ENCODE measurements at regions of chr1 and their contacts with region 1.

Region 1: DNA sequence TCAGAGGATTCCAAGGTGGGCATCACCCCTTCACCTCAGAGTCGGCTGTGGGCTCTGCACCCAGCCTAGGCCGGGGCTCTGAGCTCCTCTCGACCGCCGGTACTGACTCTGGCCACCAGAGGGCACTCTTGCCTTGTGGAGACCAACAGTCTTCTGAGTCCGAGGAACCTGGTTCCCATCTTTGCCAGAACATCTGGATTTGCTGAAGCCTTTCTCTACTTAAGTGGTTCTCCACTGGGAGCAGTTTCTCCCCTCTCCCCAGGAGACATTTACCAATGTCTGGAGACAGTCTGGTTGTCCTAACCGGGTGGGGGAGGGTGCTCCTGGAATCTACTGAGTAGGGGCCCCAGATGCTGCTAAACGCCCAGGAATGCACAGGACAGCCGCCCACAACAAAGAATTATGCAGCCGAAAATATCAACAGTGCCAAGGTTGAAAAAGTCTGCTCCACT is 9.4 kb downstream of the ETV3L start:
- DNase-seq: peak; percentile 93
- ATAC-seq: peak; percentile 92
- H3K4me3 Mint-ChIP-seq: no peak overlapping the region
- H3K27ac Mint-ChIP-seq: no peak overlapping the region
- H3K4me1 Mint-ChIP-seq: no peaks in the 10 kb centered on the region
- H3K27me3 Mint-ChIP-seq: peaks cover 5% of the 10 kb centered on the region
- CTCF ChIP-seq: peak; percentile 93

Region 2: GRCh38 chr1:157073944-157074767 is 16.1 kb before region 1 on chr1:
- CTCF ChIA-PET with region 1: interaction called, 12 read pairs
- POLR2A ChIA-PET with region 1: no interaction called
- intact Hi-C with region 1: no loop called
- DNase-seq: peak; percentile 75
- ATAC-seq: no peak
- H3K4me3 Mint-ChIP-seq: no peak overlapping the region
- H3K27ac Mint-ChIP-seq: no peak overlapping the region
- H3K4me1 Mint-ChIP-seq: no peaks in the 10 kb centered on the region
- H3K27me3 Mint-ChIP-seq: peaks cover 19% of the 10 kb centered on the region
- CTCF ChIP-seq: peak; percentile 53

Region 3: DNA sequence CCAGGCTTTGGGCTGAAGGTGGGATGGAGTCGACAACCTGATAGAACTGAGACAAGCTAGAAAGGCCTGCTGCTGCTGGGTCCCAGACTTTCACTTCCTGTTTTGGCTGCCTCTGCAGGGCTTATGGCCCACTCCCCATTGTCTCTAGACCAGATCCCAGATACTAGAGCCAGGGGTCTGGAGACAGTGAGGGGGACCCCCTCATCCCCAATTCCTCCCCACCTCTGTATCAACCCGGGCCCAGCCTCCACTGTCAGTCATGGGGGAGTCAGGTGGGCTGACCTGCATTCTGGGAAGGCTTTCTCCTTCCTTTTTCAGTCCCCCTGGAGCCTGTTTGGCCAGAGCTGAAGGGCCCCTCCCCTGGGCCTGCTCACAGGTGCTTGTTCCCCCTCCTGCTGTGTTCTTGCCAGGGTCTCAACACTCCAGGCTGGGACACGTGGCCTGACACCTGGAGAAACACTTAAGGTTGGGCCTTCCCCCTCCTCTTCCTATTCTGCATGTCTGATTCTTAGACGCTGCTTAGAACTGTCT is 27.4 kb after region 1 on chr1:
- CTCF ChIA-PET with region 1: interaction called, 27 read pairs
- POLR2A ChIA-PET with region 1: interaction called, 3 read pairs
- intact Hi-C with region 1: no loop called
- DNase-seq: no peak
- ATAC-seq: no peak
- H3K4me3 Mint-ChIP-seq: no peak overlapping the region
- H3K27ac Mint-ChIP-seq: no peak overlapping the region
- H3K4me1 Mint-ChIP-seq: no peaks in the 10 kb centered on the region
- H3K27me3 Mint-ChIP-seq: no peaks in the 10 kb centered on the region
- CTCF ChIP-seq: no peak

Region 4: GRCh38 chr1:157156058-157156541 is 65.9 kb after region 1 on chr1:
- CTCF ChIA-PET with region 1: interaction called, 562 read pairs
- POLR2A ChIA-PET with region 1: interaction called, 18 read pairs
- intact Hi-C with region 1: loop called (anchors 2 kb)
- DNase-seq: peak; percentile 86
- ATAC-seq: peak; percentile 80
- H3K4me3 Mint-ChIP-seq: no peak overlapping the region
- H3K27ac Mint-ChIP-seq: no peak overlapping the region
- H3K4me1 Mint-ChIP-seq: peaks cover 14% of the 10 kb centered on the region
- H3K27me3 Mint-ChIP-seq: peaks cover 3% of the 10 kb centered on the region
- CTCF ChIP-seq: peak; percentile 97

Region 5: GRCh38 chr1:157176591-157177121 is 86.4 kb after region 1 on chr1:
- CTCF ChIA-PET with region 1: interaction called, 24 read pairs
- POLR2A ChIA-PET with region 1: no interaction called
- intact Hi-C with region 1: no loop called
- DNase-seq: no peak
- ATAC-seq: no peak
- H3K4me3 Mint-ChIP-seq: no peak overlapping the region
- H3K27ac Mint-ChIP-seq: no peak overlapping the region
- H3K4me1 Mint-ChIP-seq: no peaks in the 10 kb centered on the region
- H3K27me3 Mint-ChIP-seq: peaks cover 7% of the 10 kb centered on the region
- CTCF ChIP-seq: no peak

Measured in activated CD8-positive, alpha-beta T cell treated with anti-CD3 and anti-CD28 coated beads for 36 hours (primary cell).